ENCODE measurements at regions of chr5 and their contacts with region 1.

Region 1: GRCh38 chr5:177006265-177006972 is at the start of gene UIMC1:
- DNase-seq: peak; percentile 96
- total RNA-seq, gene UIMC1: 55.0 TPM

Region 2: GRCh38 chr5:176537608-176538504 is 468.6 kb before region 1 on chr5:
- intact Hi-C with region 1: loop called (anchors 2 kb)
- DNase-seq: peak; percentile 99

Region 3: GRCh38 chr5:177022384-177023308 is 16.2 kb after region 1 on chr5 and contains the start of gene ZNF346:
- intact Hi-C with region 1: loop called (anchors 2 kb)
- DNase-seq: peak; percentile 94
- total RNA-seq, gene ZNF346: 9.1 TPM